Right ventricle myocardium inferior (tissue), 1 donor: ENCODE measurements at regions of chr3 and their contacts with region 1.

Region 1: GRCh38 chr3:196192036-196192523 is 19.1 kb downstream of the ZDHHC19 start:
- DNase-seq: no peak
- ATAC-seq: no peak

Region 2: GRCh38 chr3:196020373-196020772 is 171.7 kb before region 1 on chr3:
- intact Hi-C with region 1: loop called (anchors 10 kb)
- DNase-seq: no peak
- ATAC-seq: no peak

Region 3: GRCh38 chr3:196073188-196073838 is 118.8 kb before region 1 on chr3:
- intact Hi-C with region 1: loop called (anchors 1 kb)
- DNase-seq: no peak
- ATAC-seq: peak; percentile 81

Region 4: GRCh38 chr3:196081791-196082618 is 110.1 kb before region 1 on chr3 and contains the start of gene TFRC:
- intact Hi-C with region 1: loop called (anchors 2 kb)
- DNase-seq: peak; percentile 98
- ATAC-seq: peak; percentile 99
- total RNA-seq, gene TFRC: 91.8 TPM